Panc1 (cell line): ENCODE measurements at regions of chr9 and their contacts with region 1.

Region 1: DNA sequence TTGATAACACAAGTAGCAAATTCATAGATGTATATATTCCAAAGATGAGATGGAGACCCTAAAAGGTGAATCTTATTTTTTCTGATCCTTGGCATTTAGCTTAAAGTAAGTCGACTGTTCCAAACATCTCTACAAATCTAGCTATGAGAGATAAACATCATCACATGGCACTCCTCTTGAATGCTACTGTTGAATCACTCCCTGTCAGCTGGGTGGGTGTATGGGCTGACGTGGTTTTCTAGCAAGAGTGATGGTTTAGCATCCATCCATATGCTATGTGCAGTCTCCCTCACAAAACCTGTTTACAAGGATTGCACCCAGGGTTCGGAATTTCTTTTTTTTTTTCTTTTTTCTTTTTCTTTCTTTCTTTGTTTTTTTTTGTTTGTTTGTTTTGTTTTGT is 13.8 kb downstream of the ACO1 start:
- DNase-seq: no peak
- ATAC-seq: no peak
- H3K4me3 ChIP-seq: no peak overlapping the region
- H3K27ac ChIP-seq: no peak overlapping the region
- H3K4me1 ChIP-seq: peaks cover 13% of the 10 kb centered on the region
- H3K27me3 ChIP-seq: no peaks in the 10 kb centered on the region
- CTCF ChIP-seq: no peak

Region 2: DNA sequence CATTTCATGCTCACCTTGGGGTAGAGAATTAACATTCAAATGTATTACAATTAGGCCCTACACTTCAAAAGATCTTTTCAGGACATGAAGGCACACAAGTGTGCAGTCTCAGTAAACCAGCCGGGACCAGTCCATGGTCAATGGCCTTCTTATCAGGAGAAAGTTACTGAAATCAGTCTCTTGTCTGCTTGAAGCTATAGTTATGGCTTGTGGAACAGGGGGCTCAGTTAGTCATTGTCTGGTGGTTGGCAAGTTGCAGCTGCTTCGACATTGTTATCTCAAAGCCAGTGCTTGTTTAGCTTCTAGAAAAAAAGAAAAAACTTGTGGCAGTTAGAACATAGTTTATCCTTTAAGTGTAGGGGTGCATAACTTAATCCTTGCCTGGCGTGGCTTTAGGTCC is 226.9 kb before region 1 on chr9:
- CTCF ChIA-PET with region 1: no interaction called
- POLR2A ChIA-PET with region 1: no interaction called
- in situ Hi-C with region 1: no loop called
- intact Hi-C with region 1: no loop called
- DNase-seq: no peak
- ATAC-seq: no peak
- H3K4me3 ChIP-seq: no peak overlapping the region
- H3K27ac ChIP-seq: no peak overlapping the region
- H3K4me1 ChIP-seq: no peaks in the 10 kb centered on the region
- H3K27me3 ChIP-seq: no peaks in the 10 kb centered on the region
- CTCF ChIP-seq: no peak

Region 3: GRCh38 chr9:32360983-32361673 is 37.1 kb before region 1 on chr9:
- CTCF ChIA-PET with region 1: no interaction called
- POLR2A ChIA-PET with region 1: no interaction called
- in situ Hi-C with region 1: no loop called
- intact Hi-C with region 1: no loop called
- DNase-seq: no peak
- ATAC-seq: no peak
- H3K4me3 ChIP-seq: no peak overlapping the region
- H3K27ac ChIP-seq: no peak overlapping the region
- H3K4me1 ChIP-seq: no peaks in the 10 kb centered on the region
- H3K27me3 ChIP-seq: no peaks in the 10 kb centered on the region
- CTCF ChIP-seq: no peak

Region 4: DNA sequence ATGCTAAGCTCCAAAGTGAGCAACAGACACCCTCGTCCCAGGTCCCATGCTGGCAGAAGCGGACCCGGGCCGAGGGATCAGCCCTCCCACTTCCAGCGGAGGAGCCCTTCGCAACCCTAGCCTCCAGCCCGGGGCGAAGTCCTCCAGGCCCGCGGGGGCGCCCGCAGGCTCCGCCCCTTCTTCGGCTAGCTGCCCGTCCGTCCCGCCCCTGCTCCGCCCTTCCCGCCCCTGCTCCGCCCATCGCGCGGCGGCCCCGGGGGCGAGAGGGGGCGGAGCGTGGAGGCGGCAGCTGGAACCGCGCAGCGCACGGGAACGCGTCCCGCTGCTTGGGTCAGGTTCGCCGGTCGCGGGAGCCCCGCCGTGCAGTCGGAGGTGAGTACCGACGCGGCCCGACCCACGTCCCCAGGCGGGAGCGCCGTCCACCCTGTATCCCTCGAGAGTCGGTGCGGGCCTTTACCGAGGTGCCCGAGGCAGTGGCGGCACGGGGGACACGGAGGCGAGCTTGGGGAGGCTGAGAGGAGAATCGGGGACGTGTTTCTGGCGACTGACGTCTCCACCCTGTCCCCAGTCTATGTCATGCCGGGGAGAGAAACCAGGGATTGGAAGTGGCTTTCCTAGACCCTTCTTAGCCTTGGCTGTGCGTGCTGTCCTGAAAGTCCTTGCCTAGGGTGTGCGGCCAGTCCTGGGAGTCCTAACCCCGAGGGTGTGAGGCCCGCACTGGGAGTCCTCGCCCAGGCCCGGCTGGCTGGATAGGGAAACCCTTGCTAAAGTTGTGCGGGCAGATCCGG is 13.6 kb before region 1 on chr9 and contains the start of gene ACO1:
- CTCF ChIA-PET with region 1: no interaction called
- POLR2A ChIA-PET with region 1: interaction called, 10 read pairs
- in situ Hi-C with region 1: no loop called
- intact Hi-C with region 1: no loop called
- DNase-seq: no peak
- ATAC-seq: peak; percentile 98
- H3K4me3 ChIP-seq: peak within 1 kb of the TSS; percentile 83 to 95
- H3K27ac ChIP-seq: peak within 1 kb of the TSS; percentile 89
- H3K4me1 ChIP-seq: peaks cover 18% of the 10 kb centered on the region
- H3K27me3 ChIP-seq: peaks cover 4% of the 10 kb centered on the region; the same call in 1 of the 2 replicates
- CTCF ChIP-seq: peak; percentile 45
- total RNA-seq, gene ACO1: 49.3 TPM

Region 5: GRCh38 chr9:32627394-32627944 is 229.3 kb after region 1 on chr9:
- CTCF ChIA-PET with region 1: no interaction called
- POLR2A ChIA-PET with region 1: no interaction called
- in situ Hi-C with region 1: no loop called
- intact Hi-C with region 1: no loop called
- DNase-seq: no peak
- ATAC-seq: no peak
- H3K4me3 ChIP-seq: no peak overlapping the region
- H3K27ac ChIP-seq: no peak overlapping the region
- H3K4me1 ChIP-seq: no peaks in the 10 kb centered on the region
- H3K27me3 ChIP-seq: no peaks in the 10 kb centered on the region
- CTCF ChIP-seq: no peak

Region 6: DNA sequence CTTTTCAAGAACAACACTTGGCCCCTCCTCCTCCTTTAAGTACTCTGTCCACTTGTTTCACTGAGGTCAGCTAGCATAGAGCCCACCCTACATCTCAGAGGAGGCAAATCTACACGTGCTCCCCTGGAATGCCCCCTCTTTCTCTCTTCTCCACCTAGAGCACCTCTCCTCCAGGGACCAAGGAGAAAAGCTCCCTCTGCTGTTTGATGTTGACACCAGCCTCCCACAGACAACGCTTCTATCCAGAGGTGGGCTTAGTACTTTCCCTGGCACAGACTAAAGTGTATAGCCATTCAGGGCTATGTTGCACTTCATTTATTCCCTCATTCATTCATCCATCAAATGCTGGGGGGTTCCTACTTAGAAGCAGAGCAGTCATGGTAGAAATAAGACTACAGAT is 305.4 kb after region 1 on chr9:
- CTCF ChIA-PET with region 1: no interaction called
- POLR2A ChIA-PET with region 1: no interaction called
- in situ Hi-C with region 1: no loop called
- intact Hi-C with region 1: no loop called
- DNase-seq: peak; percentile 4
- ATAC-seq: 0 out of 2 replicates have a peak, but pooled peaks have one; percentile 56
- H3K4me3 ChIP-seq: no peak overlapping the region
- H3K27ac ChIP-seq: no peak overlapping the region
- H3K4me1 ChIP-seq: no peaks in the 10 kb centered on the region
- H3K27me3 ChIP-seq: no peaks in the 10 kb centered on the region
- CTCF ChIP-seq: peak; percentile 51